H1 (cell line): ENCODE measurements at regions of chr6 and their contacts with region 1.

Region 1: DNA sequence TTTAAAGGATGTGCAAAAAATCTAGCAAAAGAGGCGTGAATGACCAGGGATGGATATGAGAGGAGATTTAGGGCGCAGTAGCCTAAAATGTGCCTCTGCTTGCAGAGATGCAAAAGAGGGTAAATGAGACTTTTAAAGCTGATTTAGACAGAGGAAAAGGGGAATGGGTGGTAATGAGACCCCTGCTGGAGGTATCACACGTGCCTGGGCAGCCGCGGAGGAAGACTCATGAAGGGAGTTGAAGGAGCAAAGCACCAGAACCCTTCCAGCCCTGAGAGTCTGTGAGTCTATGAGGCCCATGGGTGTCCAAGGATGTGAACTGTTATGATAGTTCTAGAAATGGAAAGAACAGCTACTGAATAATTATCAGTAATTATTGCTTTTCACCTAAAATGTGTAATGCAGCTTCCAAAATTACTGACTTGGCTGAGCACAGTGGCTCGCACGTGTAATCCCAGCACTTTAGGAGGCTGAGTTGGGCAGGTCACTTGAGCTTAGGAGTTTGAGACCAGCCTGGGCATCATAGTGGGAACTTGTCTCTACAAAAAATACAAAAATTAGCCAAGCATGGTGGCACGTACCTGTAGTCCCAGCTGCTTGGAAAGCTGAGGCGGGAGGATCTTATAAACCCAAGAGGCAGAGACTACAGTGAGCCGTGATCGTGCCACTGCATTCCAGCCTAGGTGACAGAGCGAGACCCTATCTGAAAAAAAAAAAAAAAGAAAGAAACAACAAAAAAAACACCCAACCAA is 38.2 kb upstream of the TIAM2 start:
- DNase-seq: no peak
- H3K4me3 ChIP-seq: no peak overlapping the region
- H3K27ac ChIP-seq: no peak overlapping the region
- H3K4me1 ChIP-seq: no peaks in the 10 kb centered on the region
- H3K27me3 ChIP-seq: no peaks in the 10 kb centered on the region
- CTCF ChIP-seq: peak; percentile 28 to 31 (median 29)
- EP300 ChIP-seq: no peak
- POLR2A ChIP-seq: no peak
- RAD21 ChIP-seq: peak; percentile 32 to 41; a peak in 3 of 4 replicates

Region 2: GRCh38 chr6:154945206-154945885 is 11.6 kb before region 1 on chr6:
- CTCF ChIA-PET with region 1: interaction called, 18 read pairs
- POLR2A ChIA-PET with region 1: interaction called, 3 read pairs
- DNase-seq: no peak
- H3K4me3 ChIP-seq: no peak overlapping the region
- H3K27ac ChIP-seq: no peak overlapping the region
- H3K4me1 ChIP-seq: no peaks in the 10 kb centered on the region
- H3K27me3 ChIP-seq: no peaks in the 10 kb centered on the region
- CTCF ChIP-seq: no peak
- EP300 ChIP-seq: no peak
- POLR2A ChIP-seq: no peak
- RAD21 ChIP-seq: no peak

Region 3: DNA sequence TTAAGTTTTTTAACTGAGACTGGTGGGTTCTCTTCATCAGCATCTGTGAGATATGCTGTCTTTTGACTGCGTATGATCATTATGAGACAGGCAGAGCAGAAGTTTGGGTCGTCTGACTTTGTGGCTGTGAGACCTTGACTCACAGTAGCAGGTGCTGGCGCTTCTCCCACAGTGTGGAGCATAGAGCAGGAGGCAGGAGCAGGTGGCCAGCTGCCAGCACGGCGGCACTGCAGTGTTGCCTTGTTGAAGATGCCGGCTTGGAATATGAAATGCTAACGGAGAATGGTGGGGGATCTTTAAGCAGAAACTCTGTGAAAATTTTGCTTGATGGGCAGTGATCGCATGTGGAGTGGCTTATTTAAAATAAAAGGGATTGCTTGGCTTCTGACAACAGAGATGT is 143.1 kb after region 1 on chr6:
- CTCF ChIA-PET with region 1: no interaction called
- POLR2A ChIA-PET with region 1: no interaction called
- DNase-seq: no peak
- H3K4me3 ChIP-seq: no peak overlapping the region
- H3K27ac ChIP-seq: no peak overlapping the region
- H3K4me1 ChIP-seq: no peaks in the 10 kb centered on the region
- H3K27me3 ChIP-seq: no peaks in the 10 kb centered on the region
- CTCF ChIP-seq: no peak
- EP300 ChIP-seq: no peak
- POLR2A ChIP-seq: no peak
- RAD21 ChIP-seq: no peak

Region 4: GRCh38 chr6:156575361-156575760 is 1618.4 kb after region 1 on chr6:
- CTCF ChIA-PET with region 1: no interaction called
- POLR2A ChIA-PET with region 1: no interaction called
- DNase-seq: no peak
- H3K4me3 ChIP-seq: no peak overlapping the region
- H3K27ac ChIP-seq: no peak overlapping the region
- H3K4me1 ChIP-seq: no peaks in the 10 kb centered on the region
- H3K27me3 ChIP-seq: no peaks in the 10 kb centered on the region
- CTCF ChIP-seq: no peak
- EP300 ChIP-seq: no peak
- POLR2A ChIP-seq: no peak
- RAD21 ChIP-seq: no peak